Calu3 (cell line): ENCODE measurements at regions of chr11 and their contacts with region 1.

Region 1: DNA sequence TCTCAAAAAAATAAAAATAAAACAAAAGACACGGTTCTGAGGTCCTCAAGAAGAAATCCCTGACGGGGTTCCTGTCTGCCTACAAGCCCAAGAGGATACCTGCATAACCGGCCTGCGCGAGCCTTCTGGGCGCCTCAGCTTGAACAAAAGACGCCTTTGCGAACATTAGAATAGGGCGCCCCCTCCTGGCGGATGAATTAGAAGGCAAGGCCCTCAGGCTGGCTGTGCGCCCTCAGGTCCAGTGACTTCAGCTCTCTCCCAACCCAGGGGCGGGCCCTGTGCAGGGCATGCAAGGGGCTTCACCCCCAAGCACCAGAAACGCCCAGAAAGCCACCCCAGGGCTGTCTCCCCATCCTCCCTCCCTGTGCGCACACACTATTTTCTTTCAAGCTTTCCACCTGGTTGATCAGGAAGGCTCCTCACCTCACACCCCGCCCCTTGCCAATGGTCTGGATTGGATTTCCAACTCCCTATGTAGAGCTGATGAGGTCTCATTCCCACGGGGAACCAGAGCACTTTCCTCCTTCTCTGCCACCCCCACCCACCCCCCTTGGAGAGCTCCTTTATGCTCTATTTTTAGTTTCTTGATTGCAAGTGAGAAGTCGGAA is 273.3 kb downstream of the BUD13 start:
- DNase-seq: peak; percentile 86
- H3K4me3 Mint-ChIP-seq: no peak overlapping the region
- H3K27ac Mint-ChIP-seq: no peak overlapping the region
- H3K4me1 Mint-ChIP-seq: no peaks in the 10 kb centered on the region
- H3K27me3 Mint-ChIP-seq: peaks cover 57% of the 10 kb centered on the region
- CTCF ChIP-seq: peak; percentile 47

Region 2: GRCh38 chr11:116224154-116224888 is 275.2 kb before region 1 on chr11:
- CTCF ChIA-PET with region 1: no interaction called
- intact Hi-C with region 1: no loop called
- DNase-seq: peak; percentile 44
- H3K4me3 Mint-ChIP-seq: no peak overlapping the region
- H3K27ac Mint-ChIP-seq: no peak overlapping the region
- H3K4me1 Mint-ChIP-seq: no peaks in the 10 kb centered on the region
- H3K27me3 Mint-ChIP-seq: peaks cover 68% of the 10 kb centered on the region
- CTCF ChIP-seq: peak; percentile 20

Region 3: DNA sequence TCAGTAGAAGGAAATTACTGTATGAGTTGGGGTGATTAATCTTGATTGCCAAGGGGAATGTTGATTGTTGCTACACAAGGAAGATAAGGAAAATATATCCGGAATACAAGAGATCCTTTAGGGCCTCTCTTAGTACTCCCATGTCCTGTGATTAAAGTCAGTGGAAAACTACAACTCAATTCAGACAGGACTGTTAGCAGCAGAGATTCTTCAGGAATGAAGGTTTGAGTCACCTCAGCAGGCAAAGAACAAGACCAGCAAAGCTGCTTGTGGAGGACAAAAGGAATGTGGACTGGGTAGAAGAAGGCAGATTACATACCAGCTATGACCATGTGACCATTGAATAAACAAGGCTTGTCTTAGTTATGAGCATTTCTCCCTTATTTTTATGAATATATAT is 204.9 kb before region 1 on chr11:
- CTCF ChIA-PET with region 1: no interaction called
- intact Hi-C with region 1: loop called (anchors 10 kb)
- DNase-seq: peak; percentile 23
- H3K4me3 Mint-ChIP-seq: no peak overlapping the region
- H3K27ac Mint-ChIP-seq: no peak overlapping the region
- H3K4me1 Mint-ChIP-seq: no peaks in the 10 kb centered on the region
- H3K27me3 Mint-ChIP-seq: no peaks in the 10 kb centered on the region
- CTCF ChIP-seq: no peak

Region 4: DNA sequence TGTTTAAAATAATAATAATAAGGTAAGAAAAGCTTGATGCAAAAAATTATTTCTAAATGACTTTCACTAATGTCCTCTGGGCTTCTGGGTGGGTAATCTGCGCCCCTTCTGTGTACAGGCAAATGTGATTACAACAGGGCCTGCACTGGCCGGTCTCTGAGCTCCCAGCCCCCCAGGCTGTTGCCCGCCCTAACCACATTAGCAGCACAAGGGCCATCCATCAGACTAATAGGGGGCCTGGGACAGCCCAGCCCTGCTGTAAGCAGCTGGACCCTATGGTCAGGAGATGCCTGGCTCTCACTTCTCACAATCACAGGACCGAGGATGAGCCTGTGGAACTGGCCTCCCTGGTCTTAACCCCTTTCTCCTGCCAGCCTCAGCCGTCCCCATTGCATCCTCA is 115.1 kb before region 1 on chr11:
- CTCF ChIA-PET with region 1: no interaction called
- intact Hi-C with region 1: loop called (anchors 10 kb)
- DNase-seq: no peak
- H3K4me3 Mint-ChIP-seq: no peak overlapping the region
- H3K27ac Mint-ChIP-seq: no peak overlapping the region
- H3K4me1 Mint-ChIP-seq: no peaks in the 10 kb centered on the region
- H3K27me3 Mint-ChIP-seq: peaks cover 45% of the 10 kb centered on the region
- CTCF ChIP-seq: no peak

Region 5: DNA sequence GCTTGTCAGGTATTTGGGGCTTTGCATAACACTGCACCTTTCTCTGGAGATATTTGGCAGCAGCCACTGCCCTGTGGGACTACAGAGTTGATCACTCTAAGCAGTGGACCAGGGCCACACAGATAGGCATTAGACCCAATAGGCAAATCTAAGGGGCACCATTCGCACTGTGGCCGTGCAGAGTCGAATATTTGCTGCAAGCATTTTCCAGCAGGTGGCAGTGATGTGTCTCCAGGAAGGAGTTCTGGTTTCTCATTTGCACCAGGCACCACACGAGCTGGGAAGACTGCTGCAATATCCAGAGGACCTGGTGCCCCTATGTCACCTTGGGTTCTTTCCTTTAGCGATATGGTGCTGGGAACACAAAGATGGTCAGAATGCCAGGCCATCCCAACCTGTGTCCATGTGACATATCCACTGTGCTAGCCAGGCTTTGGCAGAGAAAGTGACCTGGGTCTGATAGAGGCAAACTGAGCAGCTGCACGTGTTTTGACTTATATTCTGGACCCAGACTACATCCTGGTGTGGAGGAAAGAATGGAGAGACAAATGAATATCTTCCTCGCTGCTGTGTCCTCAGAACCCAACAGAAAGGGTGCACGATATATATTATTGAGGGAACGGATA is 45.4 kb before region 1 on chr11:
- CTCF ChIA-PET with region 1: interaction called, 10 read pairs
- intact Hi-C with region 1: loop called (anchors 1 kb)
- DNase-seq: peak; percentile 56
- H3K4me3 Mint-ChIP-seq: no peak overlapping the region
- H3K27ac Mint-ChIP-seq: no peak overlapping the region
- H3K4me1 Mint-ChIP-seq: no peaks in the 10 kb centered on the region
- H3K27me3 Mint-ChIP-seq: peaks cover 15% of the 10 kb centered on the region
- CTCF ChIP-seq: peak; percentile 30